ENCODE measurements at regions of chr22 and their contacts with region 1.

Region 1: GRCh38 chr22:39856588-39856987 is 37.0 kb downstream of the ENTHD1 start:
- DNase-seq: no peak
- ATAC-seq: no peak
- H3K4me3 ChIP-seq: no peak overlapping the region
- H3K27ac ChIP-seq: no peak overlapping the region
- H3K4me1 ChIP-seq: no peaks in the 10 kb centered on the region
- H3K27me3 ChIP-seq: peaks cover 34% of the 10 kb centered on the region
- CTCF ChIP-seq: no peak

Region 2: GRCh38 chr22:39932166-39932565 is 75.6 kb after region 1 on chr22:
- CTCF ChIA-PET with region 1: no interaction called
- POLR2A ChIA-PET with region 1: interaction called, 16 read pairs
- intact Hi-C with region 1: no loop called
- DNase-seq: no peak
- ATAC-seq: no peak
- H3K4me3 ChIP-seq: no peak overlapping the region
- H3K27ac ChIP-seq: no peak overlapping the region
- H3K4me1 ChIP-seq: no peaks in the 10 kb centered on the region
- H3K27me3 ChIP-seq: peaks cover 61% of the 10 kb centered on the region
- CTCF ChIP-seq: no peak

Measured in PC-3 (cell line).